ENCODE measurements at regions of chr1 and their contacts with region 1.

Region 1: DNA sequence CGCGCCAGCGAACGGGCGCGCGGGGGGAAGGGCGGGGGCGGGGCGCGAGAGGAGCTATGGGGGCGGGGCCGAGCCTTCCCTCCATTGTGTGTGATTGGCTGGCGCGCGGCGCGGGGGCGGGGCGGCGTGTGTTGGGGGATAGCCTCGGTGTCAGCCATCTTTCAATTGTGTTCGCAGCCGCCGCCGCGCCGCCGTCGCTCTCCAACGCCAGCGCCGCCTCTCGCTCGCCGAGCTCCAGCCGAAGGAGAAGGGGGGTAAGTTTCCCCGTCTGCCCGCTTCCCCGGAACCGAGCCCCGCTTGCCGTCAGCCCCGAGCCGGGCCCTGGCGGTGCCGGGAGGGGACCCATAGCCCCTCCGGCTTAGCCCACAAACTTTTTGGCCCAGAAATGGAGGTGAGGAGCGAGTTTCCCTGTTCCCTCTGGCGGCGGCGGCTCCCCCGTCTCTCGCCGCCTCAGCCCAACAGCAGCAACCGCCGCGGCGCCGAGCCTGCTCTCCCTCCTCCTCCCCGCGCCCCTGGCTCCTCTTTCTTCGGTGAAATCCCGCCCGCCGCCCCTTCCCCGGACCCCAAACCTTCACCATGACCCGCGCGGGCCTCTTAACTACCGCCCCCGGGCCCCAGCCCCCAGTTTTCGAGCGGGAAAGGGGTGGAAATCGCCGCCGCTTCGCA is at the start of gene H3-3A:
- DNase-seq: peak; percentile 97 to 100 (median 98)
- ATAC-seq: peak; percentile 78
- H3K4me3 ChIP-seq: peak within 1 kb of the TSS; percentile 90
- H3K4me3 Mint-ChIP-seq: peak within 1 kb of the TSS; percentile 100
- H3K27ac ChIP-seq: peak within 1 kb of the TSS; percentile 89 to 97
- H3K27ac Mint-ChIP-seq: peak within 1 kb of the TSS; percentile 99
- H3K4me1 ChIP-seq: peaks cover 24% of the 10 kb centered on the region
- H3K4me1 Mint-ChIP-seq: peaks cover 62% of the 10 kb centered on the region
- H3K27me3 ChIP-seq: no peaks in the 10 kb centered on the region
- H3K27me3 Mint-ChIP-seq: no peaks in the 10 kb centered on the region
- CTCF ChIP-seq: no peak
- total RNA-seq, gene H3-3A: 372 to 380 TPM

Region 2: GRCh38 chr1:225447650-225448089 is 615.0 kb before region 1 on chr1:
- CTCF ChIA-PET with region 1: no interaction called
- POLR2A ChIA-PET with region 1: interaction called, 32 read pairs
- intact Hi-C with region 1: no loop called
- DNase-seq: no peak
- ATAC-seq: no peak
- H3K4me3 ChIP-seq: no peak overlapping the region
- H3K4me3 Mint-ChIP-seq: no peak overlapping the region
- H3K27ac ChIP-seq: no peak overlapping the region
- H3K27ac Mint-ChIP-seq: peak overlapping the region; percentile 51
- H3K4me1 ChIP-seq: peaks cover 59% of the 10 kb centered on the region
- H3K4me1 Mint-ChIP-seq: peaks cover 49% of the 10 kb centered on the region
- H3K27me3 ChIP-seq: no peaks in the 10 kb centered on the region
- H3K27me3 Mint-ChIP-seq: no peaks in the 10 kb centered on the region
- CTCF ChIP-seq: no peak

Region 3: DNA sequence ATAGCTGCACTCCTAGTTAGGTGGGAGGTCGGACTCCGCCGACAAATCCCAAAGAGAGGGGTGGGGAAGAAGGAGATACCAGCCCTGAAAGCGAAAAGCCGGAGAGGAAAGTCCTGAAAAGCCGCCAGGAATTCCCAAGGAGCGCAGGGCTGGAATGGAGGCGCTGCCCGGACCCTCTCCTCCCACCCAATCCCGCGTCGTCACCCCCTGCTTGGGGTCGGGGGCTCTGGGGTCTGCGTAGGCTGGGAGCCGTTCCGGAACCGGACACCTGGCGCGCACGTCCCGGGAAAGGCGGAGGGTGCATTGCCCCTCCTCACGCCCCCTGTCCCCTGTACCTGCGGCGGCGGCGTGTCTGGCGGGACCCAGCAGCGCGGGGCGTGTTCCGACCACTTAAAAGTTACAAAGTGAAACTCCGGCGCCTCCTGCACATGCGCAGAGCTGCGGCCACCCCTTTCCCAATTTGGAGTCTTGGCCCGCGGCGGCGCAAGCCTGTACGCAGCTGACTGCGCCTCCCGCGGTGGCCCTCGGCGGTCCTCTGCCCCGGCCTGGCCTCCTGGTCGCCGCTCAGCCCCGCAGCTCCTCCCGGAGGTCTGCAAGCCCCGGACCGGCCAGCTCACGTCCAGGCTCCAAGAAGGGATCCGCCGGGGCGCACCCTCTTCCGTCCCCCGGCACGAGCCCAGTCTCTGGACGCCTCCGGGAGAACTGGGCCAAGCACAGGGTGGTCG is 180.6 kb before region 1 on chr1 and contains the start of gene TMEM63A:
- CTCF ChIA-PET with region 1: interaction called, 3 read pairs
- POLR2A ChIA-PET with region 1: interaction called, 20 read pairs
- intact Hi-C with region 1: loop called in 1 of 2 experiments (anchors 10 kb)
- DNase-seq: peak; percentile 85 to 95 (median 91)
- ATAC-seq: peak; percentile 64
- H3K4me3 ChIP-seq: peak within 1 kb of the TSS; percentile 74
- H3K4me3 Mint-ChIP-seq: peak within 1 kb of the TSS; percentile 97
- H3K27ac ChIP-seq: peak within 1 kb of the TSS; percentile 87 to 89
- H3K27ac Mint-ChIP-seq: peak within 1 kb of the TSS; percentile 86
- H3K4me1 ChIP-seq: peaks cover 56% of the 10 kb centered on the region
- H3K4me1 Mint-ChIP-seq: peaks cover 47% of the 10 kb centered on the region
- H3K27me3 ChIP-seq: no peaks in the 10 kb centered on the region
- H3K27me3 Mint-ChIP-seq: no peaks in the 10 kb centered on the region
- CTCF ChIP-seq: peak; percentile 33
- total RNA-seq, gene TMEM63A: 199 to 204 TPM

Region 4: GRCh38 chr1:225999227-225999911 is 63.3 kb before region 1 on chr1 and contains the start of gene SDE2:
- CTCF ChIA-PET with region 1: interaction called, 27 read pairs
- POLR2A ChIA-PET with region 1: interaction called, 750 read pairs
- intact Hi-C with region 1: loop called (anchors 1 kb)
- DNase-seq: peak; percentile 99 to 100 (median 100)
- ATAC-seq: peak; percentile 75
- H3K4me3 ChIP-seq: peak within 1 kb of the TSS; percentile 88
- H3K4me3 Mint-ChIP-seq: peak within 1 kb of the TSS; percentile 99
- H3K27ac ChIP-seq: peak within 1 kb of the TSS; percentile 99
- H3K27ac Mint-ChIP-seq: peak within 1 kb of the TSS; percentile 96
- H3K4me1 ChIP-seq: peaks cover 68% of the 10 kb centered on the region
- H3K4me1 Mint-ChIP-seq: peaks cover 83% of the 10 kb centered on the region
- H3K27me3 ChIP-seq: no peaks in the 10 kb centered on the region
- H3K27me3 Mint-ChIP-seq: no peaks in the 10 kb centered on the region
- CTCF ChIP-seq: no peak
- total RNA-seq, gene SDE2: 48.2 to 49.3 TPM

Region 5: DNA sequence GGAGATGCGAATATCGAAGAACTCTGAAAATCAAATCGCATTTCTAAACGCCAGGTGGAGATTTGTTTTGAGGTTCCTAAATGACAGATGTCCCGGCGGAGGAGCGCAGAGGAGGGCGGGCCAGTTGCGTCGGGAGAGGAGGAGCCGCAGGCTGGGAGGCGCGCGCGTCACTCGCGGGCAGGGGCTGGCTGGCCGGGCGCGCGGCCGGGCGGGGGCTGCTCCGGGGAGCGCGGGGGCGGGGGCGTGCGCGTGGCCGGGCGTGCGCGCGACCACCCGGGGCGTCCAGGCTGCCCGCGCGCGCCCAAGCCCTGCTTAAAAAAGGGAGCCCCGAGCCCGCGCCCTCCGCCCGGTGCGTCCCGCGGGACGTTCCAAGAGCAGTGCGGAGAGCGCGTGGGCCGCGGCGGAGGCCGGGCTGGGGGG is 47.1 kb after region 1 on chr1:
- CTCF ChIA-PET with region 1: interaction called, 9 read pairs
- POLR2A ChIA-PET with region 1: interaction called, 39 read pairs
- intact Hi-C with region 1: no loop called
- DNase-seq: peak; percentile 50 to 90 (median 64)
- ATAC-seq: peak; percentile 85
- H3K4me3 ChIP-seq: peak overlapping the region; percentile 58
- H3K4me3 Mint-ChIP-seq: peak overlapping the region; percentile 92
- H3K27ac ChIP-seq: peak overlapping the region; percentile 29 to 53
- H3K27ac Mint-ChIP-seq: peak overlapping the region; percentile 70
- H3K4me1 ChIP-seq: peaks cover 18% of the 10 kb centered on the region
- H3K4me1 Mint-ChIP-seq: peaks cover 9% of the 10 kb centered on the region
- H3K27me3 ChIP-seq: no peaks in the 10 kb centered on the region
- H3K27me3 Mint-ChIP-seq: no peaks in the 10 kb centered on the region
- CTCF ChIP-seq: no peak

Region 6: GRCh38 chr1:226248091-226248490 is 185.4 kb after region 1 on chr1:
- CTCF ChIA-PET with region 1: no interaction called
- POLR2A ChIA-PET with region 1: no interaction called
- intact Hi-C with region 1: no loop called
- DNase-seq: peak in 1 of 14 experiments; percentile 1
- ATAC-seq: no peak
- H3K4me3 ChIP-seq: no peak overlapping the region
- H3K4me3 Mint-ChIP-seq: no peak overlapping the region
- H3K27ac ChIP-seq: no peak overlapping the region
- H3K27ac Mint-ChIP-seq: no peak overlapping the region
- H3K4me1 ChIP-seq: no peaks in the 10 kb centered on the region
- H3K4me1 Mint-ChIP-seq: no peaks in the 10 kb centered on the region
- H3K27me3 ChIP-seq: no peaks in the 10 kb centered on the region
- H3K27me3 Mint-ChIP-seq: no peaks in the 10 kb centered on the region
- CTCF ChIP-seq: no peak

Region 7: DNA sequence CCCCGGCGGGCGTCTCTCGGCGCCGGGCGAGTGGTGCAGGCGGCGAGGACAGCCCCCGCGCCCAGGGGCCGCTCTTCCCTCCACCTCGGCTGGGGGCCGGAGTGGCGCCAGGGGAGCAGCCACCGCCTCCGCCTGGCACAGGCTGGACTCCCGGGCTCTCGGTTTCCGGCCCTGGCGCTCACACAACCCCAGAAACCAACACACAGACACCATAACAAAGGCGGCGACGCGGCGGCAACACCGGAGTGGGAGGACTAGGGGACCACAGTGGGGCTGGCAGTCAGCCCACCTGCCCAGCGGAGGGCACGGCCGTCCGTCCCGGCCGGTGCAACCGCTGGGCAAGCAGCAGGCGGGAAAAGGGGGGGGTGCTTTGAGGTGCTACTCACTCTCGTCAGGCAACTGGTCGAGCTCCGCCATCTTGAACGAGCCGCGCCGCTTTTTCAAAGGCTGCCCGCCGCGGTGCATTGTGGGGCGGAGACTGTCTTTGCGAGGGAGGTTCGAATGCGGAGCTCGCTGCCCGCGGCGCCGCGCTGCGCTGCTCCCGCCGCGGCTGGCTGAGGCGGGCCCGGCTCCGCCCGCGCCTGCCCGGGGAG is 246.1 kb after region 1 on chr1 and contains the start of gene LIN9:
- CTCF ChIA-PET with region 1: no interaction called
- POLR2A ChIA-PET with region 1: interaction called, 12 read pairs
- intact Hi-C with region 1: no loop called
- DNase-seq: peak; percentile 83 to 94 (median 89)
- ATAC-seq: peak; percentile 91
- H3K4me3 ChIP-seq: peak within 1 kb of the TSS; percentile 98
- H3K4me3 Mint-ChIP-seq: peak within 1 kb of the TSS; percentile 95
- H3K27ac ChIP-seq: peak within 1 kb of the TSS in 1 of 2 donors; percentile 30
- H3K27ac Mint-ChIP-seq: peak within 1 kb of the TSS; percentile 67
- H3K4me1 ChIP-seq: peaks cover 12% of the 10 kb centered on the region
- H3K4me1 Mint-ChIP-seq: peaks cover 26% of the 10 kb centered on the region
- H3K27me3 ChIP-seq: peaks cover 0 to 8% of the 10 kb centered on the region in 2 experiments
- H3K27me3 Mint-ChIP-seq: peaks cover 25% of the 10 kb centered on the region
- CTCF ChIP-seq: no peak
- total RNA-seq, gene LIN9: 1.3 to 1.5 TPM

Measured in CD4-positive, alpha-beta T cell (primary cell).